ENCODE measurements at regions of chr19 and their contacts with region 1.

Region 1: GRCh38 chr19:35140962-35141637 is 2.0 kb upstream of the FXYD7 start:
- DNase-seq: peak; percentile 85 to 97 (median 93)
- H3K4me3 ChIP-seq: peak overlapping the region; percentile 52
- H3K27ac ChIP-seq: peak overlapping the region; percentile 62 to 95
- H3K4me1 ChIP-seq: peaks cover 12% of the 10 kb centered on the region
- H3K27me3 ChIP-seq: no peaks in the 10 kb centered on the region
- CTCF ChIP-seq: peak in 2 of 3 donors; percentile 23 to 30
- EP300 ChIP-seq: no peak
- POLR2A ChIP-seq: peak; percentile 81

Region 2: DNA sequence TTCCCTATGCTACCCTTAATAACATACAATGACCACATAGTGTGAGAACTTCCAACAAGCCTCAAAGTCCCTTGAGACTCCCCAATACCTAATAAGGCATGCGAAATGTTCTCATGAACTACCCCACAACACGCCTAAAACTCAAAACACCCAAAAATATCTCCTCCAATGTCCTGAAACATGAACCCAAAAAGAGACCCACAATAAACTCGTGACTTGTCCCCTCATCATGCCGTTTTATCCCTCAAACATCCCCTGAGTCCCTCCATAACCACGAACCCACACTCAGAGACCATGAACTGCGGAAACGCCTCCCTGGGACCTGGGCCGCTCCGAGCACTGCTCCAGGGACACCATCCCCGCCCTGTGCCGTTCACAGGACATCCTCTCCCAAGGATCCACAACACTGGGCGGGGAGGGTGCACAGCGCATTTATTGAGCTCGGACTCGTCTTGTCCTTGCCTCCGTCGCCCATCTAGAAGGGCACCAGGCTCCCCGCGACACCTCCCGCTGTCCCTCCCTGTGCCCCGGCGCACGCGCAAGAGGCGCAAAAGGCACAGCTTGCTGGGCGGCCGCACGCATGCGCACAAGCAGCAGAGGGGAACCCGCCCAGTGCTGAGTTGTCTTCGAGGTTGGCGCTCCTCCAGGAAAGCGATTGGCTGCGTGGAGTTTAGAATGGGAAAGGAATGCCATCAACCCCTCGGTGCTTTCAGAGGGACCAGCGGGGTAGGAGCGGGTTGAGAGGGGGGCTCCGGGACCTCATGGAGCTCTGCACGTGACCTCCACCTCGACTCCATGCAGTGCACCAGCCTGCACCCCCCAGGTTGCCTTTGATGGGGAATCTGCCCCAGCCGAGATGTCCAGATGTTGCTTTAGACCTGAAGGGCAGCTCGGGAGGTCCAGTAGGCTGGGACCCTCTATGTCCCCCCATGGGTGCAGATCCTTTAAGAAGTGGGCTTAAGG is 16.7 kb before region 1 on chr19:
- intact Hi-C with region 1: loop called in 1 of 4 experiments (anchors 2 kb)
- DNase-seq: peak; percentile 93 to 98 (median 94)
- H3K4me3 ChIP-seq: peak overlapping the region; percentile 56
- H3K27ac ChIP-seq: peak overlapping the region in 1 of 2 donors; percentile 65
- H3K4me1 ChIP-seq: peaks cover 4% of the 10 kb centered on the region
- H3K27me3 ChIP-seq: no peaks in the 10 kb centered on the region
- CTCF ChIP-seq: no peak
- EP300 ChIP-seq: no peak
- POLR2A ChIP-seq: peak; percentile 92